ENCODE measurements at regions of chr16 and their contacts with region 1.

Region 1: DNA sequence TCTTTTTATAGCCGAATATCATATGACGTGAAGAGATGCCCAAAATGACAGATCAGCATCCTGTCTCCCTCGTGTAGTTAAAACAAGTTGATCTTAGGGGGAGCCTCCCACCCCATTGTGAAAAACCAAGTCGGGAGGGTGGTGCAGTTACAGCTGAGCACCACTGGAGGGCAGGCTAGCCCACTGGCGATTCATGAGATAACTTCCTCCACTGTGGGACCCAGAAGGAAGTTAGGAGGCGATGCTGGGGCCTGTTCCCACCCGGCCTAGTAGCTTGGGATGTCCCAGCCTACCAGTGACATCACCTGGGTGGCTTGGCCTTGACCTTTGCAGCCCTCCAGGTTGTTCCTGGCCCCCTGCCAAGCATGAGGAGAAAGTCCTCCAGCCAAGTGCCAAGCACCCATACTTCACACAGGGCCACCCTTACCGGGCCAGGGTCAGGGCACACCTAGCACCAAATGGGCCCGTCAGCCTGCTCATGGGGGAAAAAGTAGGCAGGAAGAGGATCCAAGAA is 8.1 kb upstream of the CPNE2 start:
- DNase-seq: peak; percentile 63 to 70
- H3K4me3 ChIP-seq: no peak overlapping the region
- H3K27ac ChIP-seq: peak overlapping the region in 1 of 3 donors; percentile 33
- H3K4me1 ChIP-seq: peaks cover 0 to 12% of the 10 kb centered on the region in 2 donors
- H3K27me3 ChIP-seq: no peaks in the 10 kb centered on the region
- CTCF ChIP-seq: peak; percentile 92 to 100 (median 97)
- POLR2A ChIP-seq: no peak

Region 2: DNA sequence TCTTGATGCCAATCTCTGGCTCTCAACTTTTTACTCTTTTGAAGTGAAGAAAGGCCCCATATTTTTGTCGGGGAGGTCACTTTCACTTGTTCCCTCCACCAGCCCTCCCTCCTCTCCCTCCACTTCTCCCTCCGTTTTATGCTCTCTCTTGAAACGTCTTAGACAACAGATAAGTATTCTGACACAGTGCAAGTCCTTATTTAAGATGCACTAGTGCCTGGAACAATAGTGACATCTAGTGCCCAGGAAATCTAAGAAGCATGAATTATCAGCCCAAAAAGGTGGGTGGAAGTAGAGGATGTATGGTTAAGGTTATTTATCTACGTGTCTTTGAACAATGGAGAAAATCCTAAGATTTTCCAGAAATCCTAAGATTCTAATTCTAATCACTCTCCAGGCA is 83.6 kb after region 1 on chr16:
- intact Hi-C with region 1: loop called (anchors 5 kb)
- DNase-seq: peak; percentile 44 to 47
- H3K4me3 ChIP-seq: no peak overlapping the region
- H3K27ac ChIP-seq: peak overlapping the region; percentile 69 to 87 (median 77)
- H3K4me1 ChIP-seq: peaks cover 22 to 24% of the 10 kb centered on the region in 2 donors
- H3K27me3 ChIP-seq: no peaks in the 10 kb centered on the region
- CTCF ChIP-seq: peak in 5 of 6 experiments; percentile 30 to 96 (median 70)
- POLR2A ChIP-seq: no peak

Region 3: GRCh38 chr16:57300387-57301125 is 216.2 kb after region 1 on chr16:
- intact Hi-C with region 1: loop called (anchors 5 kb)
- DNase-seq: peak; percentile 100
- H3K4me3 ChIP-seq: peak overlapping the region in 2 of 3 donors; percentile 3 to 26
- H3K27ac ChIP-seq: peak overlapping the region; percentile 86 to 90 (median 89)
- H3K4me1 ChIP-seq: peaks cover 9 to 37% of the 10 kb centered on the region in 2 donors
- H3K27me3 ChIP-seq: no peaks in the 10 kb centered on the region
- CTCF ChIP-seq: peak; percentile 75 to 100 (median 96)
- POLR2A ChIP-seq: no peak

Measured in thyroid gland (tissue), 4 donors.